ENCODE measurements at regions of chr10 and their contacts with region 1.

Region 1: GRCh38 chr10:63976538-63976937 is 455.3 kb downstream of the REEP3 start:
- DNase-seq: peak; percentile 6
- ATAC-seq: peak; percentile 63
- H3K4me3 ChIP-seq: no peak overlapping the region
- H3K27ac ChIP-seq: no peak overlapping the region
- H3K4me1 ChIP-seq: no peaks in the 10 kb centered on the region
- H3K27me3 ChIP-seq: no peaks in the 10 kb centered on the region
- CTCF ChIP-seq: peak; percentile 33; the same call in 1 of the 2 replicates
- POLR2A ChIP-seq: no peak
- RAD21 ChIP-seq: 0 out of 2 replicates have a peak, but pooled peaks have one; percentile 3

Region 2: DNA sequence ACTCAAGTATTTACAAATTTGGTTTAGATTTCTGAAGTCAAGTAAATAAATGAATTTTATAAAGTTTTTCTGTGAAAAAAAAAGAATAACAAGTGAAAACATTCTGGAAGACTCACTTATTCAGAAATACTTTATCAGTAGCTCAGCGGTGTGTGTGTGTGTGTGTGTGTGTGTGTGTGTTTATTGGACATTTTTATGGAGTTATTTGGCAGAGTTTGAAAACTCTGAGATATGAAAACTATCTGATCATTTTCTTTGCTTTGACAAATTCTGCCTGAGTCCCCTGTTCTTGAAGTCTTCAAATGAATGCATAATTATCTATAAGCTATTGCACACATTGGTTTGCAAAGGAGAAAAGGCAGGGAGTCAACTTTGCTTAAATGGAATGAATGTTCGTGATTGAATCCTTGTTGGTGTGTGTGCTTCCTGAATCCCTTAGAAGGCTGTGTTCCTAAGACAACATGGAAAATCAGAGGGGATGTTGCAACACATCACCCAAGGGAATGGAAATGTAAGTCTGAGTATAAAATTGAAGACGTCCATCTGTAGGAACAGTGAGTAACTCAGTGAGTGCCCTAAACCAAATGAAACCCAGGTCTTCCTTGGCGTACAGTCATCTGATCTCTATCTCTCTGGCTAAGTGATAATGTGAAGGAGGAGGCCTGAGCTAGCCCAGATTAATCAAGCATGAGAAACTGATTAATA is 294.4 kb before region 1 on chr10:
- CTCF ChIA-PET with region 1: no interaction called
- POLR2A ChIA-PET with region 1: no interaction called
- dilution Hi-C with region 1: no loop called
- in situ Hi-C with region 1: no loop called
- intact Hi-C with region 1: no loop called
- DNase-seq: peak; percentile 87
- ATAC-seq: peak; percentile 91
- H3K4me3 ChIP-seq: peak overlapping the region; percentile 1; the same call in 1 of the 2 replicates
- H3K27ac ChIP-seq: peak overlapping the region; percentile 47; the same call in 1 of the 2 replicates
- H3K4me1 ChIP-seq: 0 out of 2 replicates have a peak, but pooled peaks cover 3% of the 10 kb centered on the region
- H3K27me3 ChIP-seq: no peaks in the 10 kb centered on the region; the same call in none of the 2 replicates
- CTCF ChIP-seq: no peak
- POLR2A ChIP-seq: no peak
- RAD21 ChIP-seq: no peak

Region 3: GRCh38 chr10:63866075-63866746 is 110.3 kb before region 1 on chr10:
- CTCF ChIA-PET with region 1: interaction called, 3 read pairs
- POLR2A ChIA-PET with region 1: no interaction called
- dilution Hi-C with region 1: no loop called
- in situ Hi-C with region 1: no loop called
- intact Hi-C with region 1: loop called (anchors 2 kb)
- DNase-seq: peak; percentile 47
- ATAC-seq: peak; percentile 99
- H3K4me3 ChIP-seq: no peak overlapping the region
- H3K27ac ChIP-seq: no peak overlapping the region
- H3K4me1 ChIP-seq: no peaks in the 10 kb centered on the region
- H3K27me3 ChIP-seq: peaks cover 2% of the 10 kb centered on the region; the same call in 1 of the 2 replicates
- CTCF ChIP-seq: peak; percentile 72
- POLR2A ChIP-seq: no peak
- RAD21 ChIP-seq: peak; percentile 56